ENCODE measurements at regions of chr14 and their contacts with region 1.

Region 1: DNA sequence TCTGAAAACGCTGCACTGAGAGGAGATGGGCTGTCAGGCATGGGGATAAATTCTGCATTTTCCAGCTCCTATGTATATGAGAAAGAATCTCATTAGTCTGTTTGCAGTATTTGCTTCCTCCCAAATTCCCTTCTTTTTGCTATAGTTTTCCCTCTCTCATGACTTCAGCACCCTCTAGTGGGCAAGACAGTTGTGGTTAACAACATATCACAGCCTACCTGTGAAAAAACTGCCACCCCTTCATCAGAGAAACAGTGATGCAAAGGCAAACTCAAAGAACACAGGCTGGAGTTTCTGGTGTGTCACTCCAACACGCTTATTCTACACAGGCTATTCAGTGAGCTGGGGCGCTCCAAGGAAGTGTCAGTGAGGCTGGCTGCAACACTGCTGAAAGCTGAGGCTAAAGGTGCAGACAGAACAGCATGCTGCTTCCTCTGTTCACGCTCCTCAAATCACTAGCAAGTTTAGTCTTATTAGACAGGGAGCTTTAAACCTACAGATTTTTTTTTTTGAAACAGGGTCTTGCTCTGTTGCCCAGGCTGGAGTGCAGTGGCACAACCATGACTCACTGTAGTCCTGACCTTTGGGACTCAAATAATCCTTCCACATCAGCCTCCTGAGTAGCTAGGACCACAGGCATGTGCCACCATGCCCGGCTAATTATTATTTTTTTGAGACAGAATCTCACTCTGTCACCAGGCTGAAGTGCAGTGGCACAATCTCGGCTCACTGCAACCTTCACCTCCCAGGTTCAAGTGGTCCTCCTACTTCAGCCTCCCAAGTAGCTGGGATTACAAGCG is 19.3 kb downstream of the ZC2HC1C start:
- DNase-seq: peak in 1 of 2 donors; percentile 61
- ATAC-seq: peak in 7 of 8 donors; percentile 42 to 79 (median 68)
- H3K4me3 ChIP-seq: no peak overlapping the region
- H3K27ac ChIP-seq: no peak overlapping the region
- H3K4me1 ChIP-seq: no peaks in the 10 kb centered on the region
- H3K27me3 ChIP-seq: no peaks in the 10 kb centered on the region
- CTCF ChIP-seq: peak; percentile 64 to 87 (median 77)

Region 2: DNA sequence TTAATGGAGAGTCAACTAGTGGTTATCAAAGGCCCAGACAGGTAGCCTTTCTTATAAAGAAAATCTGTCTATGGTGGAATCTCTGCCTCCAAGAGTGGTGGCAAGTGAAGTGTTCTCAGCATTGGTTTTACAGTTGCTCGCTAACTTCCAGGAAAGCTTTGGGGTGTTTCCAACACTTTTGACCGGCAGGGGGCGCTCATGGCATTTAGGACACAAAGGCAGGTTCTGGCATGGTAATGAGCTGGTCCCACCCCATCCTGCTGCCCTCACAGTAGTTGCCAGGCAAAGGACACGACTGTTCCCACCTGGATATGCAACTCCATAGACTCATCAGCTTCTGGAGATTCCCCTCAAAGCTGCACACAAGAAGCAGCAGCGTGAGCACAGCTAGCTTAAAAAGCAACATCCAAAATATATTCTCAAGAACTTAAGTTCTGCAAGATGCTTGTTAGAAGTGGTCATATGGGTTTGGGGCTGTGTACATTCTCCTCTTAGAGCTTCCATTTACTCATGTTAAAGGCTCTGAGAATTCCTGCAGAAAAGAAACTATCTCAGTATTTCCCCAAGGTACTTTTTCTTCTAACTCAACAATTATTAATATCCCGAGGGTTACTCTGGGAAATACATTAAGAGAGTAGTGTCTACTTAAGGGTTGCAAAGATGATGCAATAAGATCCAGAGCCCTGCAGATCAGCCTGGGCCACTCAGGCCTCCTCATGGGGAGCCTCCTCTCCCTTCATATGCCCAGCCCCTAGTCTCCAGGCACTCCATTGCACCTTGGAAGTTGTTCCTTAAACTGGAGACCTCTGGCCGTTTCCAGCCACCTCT is 227.7 kb before region 1 on chr14:
- intact Hi-C with region 1: loop called in 6 of 10 experiments (anchors 1 to 10 kb)
- DNase-seq: peak; percentile 90 to 91
- ATAC-seq: peak; percentile 68 to 88 (median 82)
- H3K4me3 ChIP-seq: no peak overlapping the region
- H3K27ac ChIP-seq: no peak overlapping the region
- H3K4me1 ChIP-seq: peaks cover 0 to 16% (median 13%) of the 10 kb centered on the region in 9 donors
- H3K27me3 ChIP-seq: no peaks in the 10 kb centered on the region
- CTCF ChIP-seq: peak; percentile 86 to 96 (median 88)

Region 3: GRCh38 chr14:74905375-74906142 is 183.2 kb before region 1 on chr14:
- intact Hi-C with region 1: loop called in 5 of 10 experiments (anchors 5 to 10 kb)
- DNase-seq: peak; percentile 71 to 80
- ATAC-seq: peak; percentile 30 to 56 (median 49)
- H3K4me3 ChIP-seq: no peak overlapping the region
- H3K27ac ChIP-seq: peak overlapping the region in 2 of 10 donors; percentile 16 to 24
- H3K4me1 ChIP-seq: peaks cover 16 to 60% (median 40%) of the 10 kb centered on the region in 9 donors
- H3K27me3 ChIP-seq: no peaks in the 10 kb centered on the region
- CTCF ChIP-seq: peak; percentile 76 to 96 (median 93)

Region 4: GRCh38 chr14:74913986-74914573 is 174.7 kb before region 1 on chr14:
- intact Hi-C with region 1: loop called (anchors 1 to 10 kb)
- DNase-seq: peak; percentile 64 to 82
- ATAC-seq: peak; percentile 38 to 72 (median 64)
- H3K4me3 ChIP-seq: no peak overlapping the region
- H3K27ac ChIP-seq: peak overlapping the region in 8 of 10 donors; percentile 8 to 90 (median 56)
- H3K4me1 ChIP-seq: peaks cover 25 to 69% (median 49%) of the 10 kb centered on the region in 9 donors
- H3K27me3 ChIP-seq: no peaks in the 10 kb centered on the region
- CTCF ChIP-seq: peak; percentile 52 to 91 (median 81)

Region 5: DNA sequence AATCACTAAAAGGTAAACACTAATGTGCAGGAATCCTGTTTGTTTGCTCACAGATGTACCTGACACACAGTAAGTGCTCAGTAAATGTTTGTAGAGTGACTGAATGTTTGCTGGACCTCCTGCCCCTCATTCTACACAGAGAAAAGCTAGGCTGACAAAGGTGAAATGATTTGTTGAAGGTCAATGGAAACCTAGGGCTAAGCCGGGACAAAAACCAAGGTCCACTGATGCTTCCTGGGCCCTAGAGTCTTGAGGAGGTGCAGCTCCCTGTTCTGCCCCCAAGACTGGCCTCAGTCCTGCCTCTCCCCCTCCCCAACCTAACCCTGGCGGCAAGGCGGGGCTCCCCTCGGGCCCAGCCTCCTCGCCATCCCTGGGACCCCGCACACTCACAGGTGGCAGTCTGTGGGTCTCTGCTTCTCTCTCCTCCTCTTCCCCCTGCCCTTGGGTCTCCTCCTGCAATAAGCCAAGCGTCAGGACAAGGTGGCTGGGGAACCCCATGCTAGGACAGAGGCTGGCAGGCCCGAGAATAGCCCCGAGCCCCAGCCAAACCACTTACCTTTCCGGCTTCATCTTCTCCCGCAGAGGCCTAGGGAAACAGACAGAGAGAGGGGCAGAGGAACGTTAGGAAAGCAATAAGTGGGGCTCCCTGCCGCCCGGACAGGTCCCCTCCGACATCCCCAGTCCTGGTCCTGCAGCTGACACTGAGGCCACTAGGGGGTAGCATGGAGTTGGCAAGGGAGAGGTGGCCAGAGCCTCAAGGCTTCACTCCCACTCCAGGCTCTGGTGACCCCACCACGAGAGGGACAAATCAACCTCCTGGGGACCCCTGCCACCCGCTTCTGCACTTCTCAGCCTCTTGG is 142.7 kb before region 1 on chr14:
- intact Hi-C with region 1: loop called in 8 of 10 experiments (anchors 2 to 10 kb)
- DNase-seq: peak; percentile 76 to 83
- ATAC-seq: peak; percentile 74 to 86 (median 81)
- H3K4me3 ChIP-seq: peak overlapping the region in 3 of 10 donors; percentile 4 to 21 (median 17)
- H3K27ac ChIP-seq: peak overlapping the region in 7 of 10 donors; percentile 8 to 76 (median 54)
- H3K4me1 ChIP-seq: peaks cover 14 to 72% (median 44%) of the 10 kb centered on the region in 9 donors
- H3K27me3 ChIP-seq: peaks cover 0 to 4% (median 0%) of the 10 kb centered on the region in 7 donors
- CTCF ChIP-seq: peak; percentile 89 to 96 (median 95)